ENCODE measurements at regions of chr14 and their contacts with region 1.

Region 1: GRCh38 chr14:68862954-68863594 is 70.2 kb upstream of the ZFP36L1 start:
- DNase-seq: peak; percentile 79
- H3K4me3 ChIP-seq: no peak overlapping the region
- H3K27ac ChIP-seq: no peak overlapping the region
- H3K4me1 ChIP-seq: no peaks in the 10 kb centered on the region
- CTCF ChIP-seq: peak; percentile 92

Region 2: DNA sequence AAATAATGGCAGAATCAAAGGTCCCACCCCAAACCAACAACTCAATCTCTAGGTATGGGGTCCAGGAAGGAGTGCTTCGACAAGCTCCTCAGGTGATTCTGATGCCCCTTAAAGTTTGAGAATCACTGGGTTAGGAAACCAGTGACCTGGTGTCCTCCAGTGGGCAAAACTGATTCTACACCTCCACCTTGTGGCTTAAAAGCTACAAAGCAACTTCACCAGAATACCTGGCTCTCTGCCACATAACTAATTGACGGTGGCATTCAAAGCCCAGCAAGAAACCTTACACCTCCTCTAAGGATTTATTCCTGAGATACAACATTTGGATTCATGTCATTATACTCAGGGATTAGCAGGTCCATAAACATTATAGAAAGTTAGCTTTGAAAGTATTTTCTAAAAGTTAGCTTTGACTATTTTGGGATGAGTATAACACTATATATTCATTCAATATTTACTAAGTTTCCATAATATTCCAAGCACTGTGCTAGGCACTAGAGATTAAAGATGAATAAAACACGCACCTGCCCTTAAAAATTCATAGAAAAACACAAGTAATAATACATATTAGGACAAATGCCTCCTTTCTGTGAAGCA is 244.4 kb after region 1 on chr14:
- CTCF ChIA-PET with region 1: interaction called, 4 read pairs
- POLR2A ChIA-PET with region 1: interaction called, 3 read pairs
- intact Hi-C with region 1: loop called (anchors 10 kb)
- DNase-seq: peak; percentile 51
- H3K4me3 ChIP-seq: no peak overlapping the region
- H3K27ac ChIP-seq: no peak overlapping the region
- H3K4me1 ChIP-seq: no peaks in the 10 kb centered on the region
- CTCF ChIP-seq: peak; percentile 79

Measured in OCI-LY7 (cell line).